Aorta (tissue), 5 donors: ENCODE measurements at regions of chr20 and their contacts with region 1.

Region 1: DNA sequence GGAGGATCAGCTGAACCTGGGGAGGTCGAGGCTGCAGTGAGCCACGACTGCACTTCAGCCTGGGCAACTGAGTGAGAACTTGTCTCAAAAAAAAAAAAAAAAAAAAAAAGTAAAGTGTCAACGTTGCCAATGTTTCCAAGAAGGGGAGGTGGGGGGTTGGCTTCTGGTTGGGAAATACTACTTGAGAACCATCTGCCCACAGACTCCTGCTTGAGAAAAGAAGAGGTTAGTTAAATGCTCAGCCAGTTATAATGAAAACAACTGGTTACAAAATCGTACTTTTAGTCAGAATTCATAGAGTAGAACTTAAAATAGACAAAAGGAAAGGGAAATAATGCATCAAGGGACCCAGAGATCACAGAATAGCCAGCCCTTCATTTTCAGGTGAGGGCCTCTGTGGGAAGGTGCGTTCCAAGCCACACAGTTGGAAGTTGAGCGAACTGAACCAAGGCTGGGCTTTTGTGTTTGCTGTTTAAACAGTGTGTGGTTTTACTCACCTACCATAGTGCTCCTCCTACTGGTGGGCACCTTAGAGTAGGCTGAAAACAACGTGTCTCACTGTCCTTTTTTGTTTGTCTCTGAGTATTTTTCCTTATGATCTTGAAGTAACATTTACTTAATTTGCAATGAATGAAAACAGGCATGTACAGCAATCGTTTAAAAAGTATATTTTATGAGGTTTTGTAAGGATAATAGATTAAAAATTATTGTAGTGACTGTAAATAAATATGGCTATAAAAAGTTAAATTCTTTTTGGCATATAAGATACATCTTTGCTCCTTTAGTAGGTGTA is 200.7 kb downstream of the BCAS1 start:
- DNase-seq: peak in 1 of 2 donors; percentile 58
- ATAC-seq: peak; percentile 88
- H3K4me3 ChIP-seq: no peak overlapping the region
- H3K27ac ChIP-seq: no peak overlapping the region
- H3K4me1 ChIP-seq: no peaks in the 10 kb centered on the region
- H3K27me3 ChIP-seq: no peaks in the 10 kb centered on the region

Region 2: GRCh38 chr20:53828682-53829254 is 40.9 kb before region 1 on chr20:
- intact Hi-C with region 1: no loop called
- DNase-seq: no peak
- ATAC-seq: peak; percentile 84
- H3K4me3 ChIP-seq: peak overlapping the region; percentile 51 to 67
- H3K27ac ChIP-seq: peak overlapping the region; percentile 90 to 95
- H3K4me1 ChIP-seq: peaks cover 0 to 4% of the 10 kb centered on the region in 2 donors
- H3K27me3 ChIP-seq: no peaks in the 10 kb centered on the region

Region 3: DNA sequence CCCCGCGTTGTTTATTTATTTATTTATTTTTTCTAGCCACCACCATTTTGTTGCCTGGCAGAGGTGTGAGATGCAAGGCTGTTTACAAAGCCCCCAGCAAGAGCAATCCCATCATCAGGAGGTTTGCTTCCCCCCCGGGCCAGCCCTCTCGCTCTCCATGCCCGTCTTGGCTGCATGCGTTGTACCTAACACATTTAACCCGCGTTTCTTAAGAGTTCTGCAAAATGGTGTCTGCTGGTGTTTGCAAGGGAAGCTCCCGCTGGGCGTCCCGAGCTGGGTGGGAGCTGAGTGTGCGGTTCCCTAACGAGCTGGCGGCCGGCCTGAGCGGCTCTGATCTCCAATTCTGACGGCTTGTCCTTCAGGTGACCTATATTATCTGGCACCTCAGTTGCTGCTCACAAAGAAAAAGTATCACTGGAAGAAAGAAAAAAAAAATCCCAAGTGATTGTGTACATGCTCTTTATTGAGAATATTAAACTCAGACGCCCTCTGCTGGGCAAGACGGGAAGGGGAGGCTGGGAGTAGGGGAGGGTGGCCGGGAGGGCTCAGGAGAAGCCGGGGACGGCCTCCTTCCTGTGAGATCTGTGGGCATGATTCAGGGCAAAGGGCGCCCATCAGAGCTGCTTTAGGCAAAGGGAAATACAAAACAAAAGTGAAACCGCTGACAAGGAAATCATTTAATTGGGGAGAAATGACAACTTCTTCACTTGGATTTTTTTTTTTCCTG is 45.9 kb after region 1 on chr20:
- intact Hi-C with region 1: loop called in 1 of 2 experiments (anchors 5 kb)
- DNase-seq: peak; percentile 97 to 99
- ATAC-seq: peak; percentile 96
- H3K4me3 ChIP-seq: peak overlapping the region; percentile 20 to 75
- H3K27ac ChIP-seq: peak overlapping the region in 1 of 2 donors; percentile 52
- H3K4me1 ChIP-seq: no peaks in the 10 kb centered on the region
- H3K27me3 ChIP-seq: no peaks in the 10 kb centered on the region